GM12878 (cell line): ENCODE measurements at regions of chr4 and their contacts with region 1.

Region 1: GRCh38 chr4:184815046-184815877 is 10.5 kb downstream of the ACSL1 start:
- DNase-seq: peak; percentile 89
- ATAC-seq: peak; percentile 75
- H3K4me3 ChIP-seq: peak overlapping the region; percentile 58
- H3K27ac ChIP-seq: peak overlapping the region; percentile 83
- H3K4me1 ChIP-seq: peaks cover 64% of the 10 kb centered on the region
- H3K27me3 ChIP-seq: no peaks in the 10 kb centered on the region
- CTCF ChIP-seq: no peak
- EP300 ChIP-seq: 0 out of 4 replicates have a peak, but pooled peaks of 1 of the 2 experiments have one; percentile 14
- POLR2A ChIP-seq: peak; percentile 68
- RAD21 ChIP-seq: no peak

Region 2: DNA sequence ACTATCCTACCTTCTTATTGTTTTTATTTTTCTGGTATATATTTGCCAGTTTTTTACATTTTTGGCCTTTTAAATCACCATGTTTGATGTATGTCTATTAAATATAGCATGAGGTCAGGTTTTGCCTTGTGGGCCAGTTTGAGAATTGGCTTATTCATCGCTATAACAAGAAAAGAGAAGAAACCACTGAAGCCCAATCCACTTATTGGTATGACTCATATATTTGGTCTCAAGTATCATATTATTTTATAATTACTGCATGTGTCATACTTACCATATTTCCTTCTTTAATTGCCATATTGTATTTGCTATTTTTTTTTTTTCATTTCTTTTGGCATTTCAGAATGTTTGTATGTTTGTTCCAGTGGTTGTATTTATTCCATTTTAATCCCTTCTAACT is 440.2 kb before region 1 on chr4:
- CTCF ChIA-PET with region 1: no interaction called
- POLR2A ChIA-PET with region 1: no interaction called
- RAD21 ChIA-PET with region 1: no interaction called
- SMC1A ChIA-PET with region 1: no interaction called
- in situ Hi-C with region 1: no loop called
- intact Hi-C with region 1: no loop called
- DNase-seq: no peak
- ATAC-seq: peak; percentile 80
- H3K4me3 ChIP-seq: no peak overlapping the region
- H3K27ac ChIP-seq: no peak overlapping the region
- H3K4me1 ChIP-seq: no peaks in the 10 kb centered on the region
- H3K27me3 ChIP-seq: no peaks in the 10 kb centered on the region
- CTCF ChIP-seq: no peak
- EP300 ChIP-seq: 0 out of 4 replicates have a peak, but pooled peaks of 1 of the 2 experiments have one; percentile 18
- POLR2A ChIP-seq: no peak
- RAD21 ChIP-seq: no peak

Region 3: DNA sequence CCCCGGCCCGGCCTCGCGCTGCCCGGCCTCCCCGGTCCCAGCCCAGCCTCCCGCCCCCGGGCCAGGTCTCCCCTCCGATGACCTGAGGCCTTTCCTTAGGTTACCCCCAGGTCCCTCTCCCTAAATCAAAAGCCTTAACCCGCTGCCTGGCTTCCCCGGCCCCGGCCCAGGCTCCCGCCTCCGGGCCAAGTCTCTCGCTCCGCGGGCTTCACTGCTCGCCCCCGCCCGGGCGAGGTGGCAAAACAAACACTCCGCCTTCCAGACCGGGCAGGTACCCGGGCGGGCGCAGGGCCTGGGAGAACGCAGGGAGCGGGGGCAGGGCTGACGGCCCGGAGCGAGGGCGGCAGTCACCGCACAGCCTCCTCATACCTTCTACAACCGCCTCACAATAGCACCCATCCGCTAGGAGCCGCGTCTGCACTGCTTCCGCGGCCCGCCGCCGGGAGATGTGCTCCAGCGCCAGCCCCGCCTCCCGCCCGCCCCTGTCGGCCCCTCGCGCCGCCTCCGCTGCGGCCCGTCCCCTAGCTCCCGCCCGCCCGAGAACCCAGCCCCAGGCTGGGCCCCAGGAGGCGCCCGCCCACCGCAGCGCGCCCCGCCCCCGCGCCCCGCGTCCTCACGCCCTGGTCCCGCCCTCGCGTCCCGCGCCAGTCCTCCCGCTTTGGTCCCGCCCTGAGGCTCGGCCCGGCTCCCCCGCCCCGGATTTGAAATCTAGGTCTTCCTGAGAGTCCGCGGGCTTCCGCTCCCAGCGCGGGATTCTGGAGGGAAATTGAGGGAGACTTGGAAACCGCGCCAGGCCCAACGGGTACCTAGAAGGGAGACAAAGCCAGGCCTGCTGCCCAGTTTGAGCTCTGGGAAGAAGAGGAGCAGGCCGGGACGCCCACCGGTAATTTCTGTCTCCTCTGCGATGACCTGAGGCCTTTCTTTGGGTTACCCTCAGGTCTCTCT is 166.0 kb before region 1 on chr4 and contains the starts of genes CASP3 and PRIMPOL:
- CTCF ChIA-PET with region 1: interaction called, 3 read pairs
- POLR2A ChIA-PET with region 1: interaction called, 5 read pairs
- RAD21 ChIA-PET with region 1: interaction called, 5 read pairs
- SMC1A ChIA-PET with region 1: no interaction called
- in situ Hi-C with region 1: no loop called
- intact Hi-C with region 1: loop called (anchors 10 kb)
- DNase-seq: peak; percentile 60
- ATAC-seq: peak; percentile 90
- H3K4me3 ChIP-seq: peak within 1 kb of the TSS; percentile 98
- H3K27ac ChIP-seq: peak within 1 kb of the TSS; percentile 85
- H3K4me1 ChIP-seq: peaks cover 12% of the 10 kb centered on the region; the same call in 1 of the 2 replicates
- H3K27me3 ChIP-seq: no peaks in the 10 kb centered on the region
- CTCF ChIP-seq: peak in 2 of 3 experiments; percentile 26 to 43; a peak in 3 of 6 replicates
- EP300 ChIP-seq: no peak
- POLR2A ChIP-seq: peak; percentile 93
- RAD21 ChIP-seq: peak; percentile 28
- polyA plus RNA-seq, gene CASP3: 50.0 to 59.0 TPM
- polyA plus RNA-seq, gene PRIMPOL: 10.6 to 11.5 TPM

Region 4: GRCh38 chr4:184745831-184746795 is 69.1 kb before region 1 on chr4:
- CTCF ChIA-PET with region 1: interaction called, 11 read pairs
- POLR2A ChIA-PET with region 1: interaction called, 4 read pairs
- RAD21 ChIA-PET with region 1: interaction called, 14 read pairs
- SMC1A ChIA-PET with region 1: interaction called, 13 read pairs
- in situ Hi-C with region 1: no loop called
- intact Hi-C with region 1: loop called (anchors 5 kb)
- DNase-seq: no peak
- ATAC-seq: peak; percentile 89
- H3K4me3 ChIP-seq: no peak overlapping the region
- H3K27ac ChIP-seq: no peak overlapping the region
- H3K4me1 ChIP-seq: no peaks in the 10 kb centered on the region
- H3K27me3 ChIP-seq: no peaks in the 10 kb centered on the region
- CTCF ChIP-seq: peak; percentile 77 to 85 (median 82)
- EP300 ChIP-seq: no peak
- POLR2A ChIP-seq: no peak
- RAD21 ChIP-seq: peak; percentile 93

Region 5: GRCh38 chr4:184825896-184826690 is 10.8 kb after region 1 on chr4 and contains the start of gene ACSL1:
- CTCF ChIA-PET with region 1: interaction called, 4 read pairs
- POLR2A ChIA-PET with region 1: interaction called, 6 read pairs
- RAD21 ChIA-PET with region 1: interaction called, 29 read pairs
- SMC1A ChIA-PET with region 1: interaction called, 31 read pairs
- in situ Hi-C with region 1: no loop called
- intact Hi-C with region 1: loop called (anchors 1 kb)
- DNase-seq: no peak
- ATAC-seq: peak; percentile 70
- H3K4me3 ChIP-seq: peak within 1 kb of the TSS; percentile 77
- H3K27ac ChIP-seq: peak within 1 kb of the TSS; percentile 90
- H3K4me1 ChIP-seq: peaks cover 22% of the 10 kb centered on the region
- H3K27me3 ChIP-seq: no peaks in the 10 kb centered on the region
- CTCF ChIP-seq: 0 out of 6 replicates have a peak, but pooled peaks of 1 of the 3 experiments have one; percentile 4
- EP300 ChIP-seq: no peak
- POLR2A ChIP-seq: peak; percentile 88
- RAD21 ChIP-seq: no peak
- polyA plus RNA-seq, gene ACSL1: 30.7 to 32.6 TPM

Region 6: DNA sequence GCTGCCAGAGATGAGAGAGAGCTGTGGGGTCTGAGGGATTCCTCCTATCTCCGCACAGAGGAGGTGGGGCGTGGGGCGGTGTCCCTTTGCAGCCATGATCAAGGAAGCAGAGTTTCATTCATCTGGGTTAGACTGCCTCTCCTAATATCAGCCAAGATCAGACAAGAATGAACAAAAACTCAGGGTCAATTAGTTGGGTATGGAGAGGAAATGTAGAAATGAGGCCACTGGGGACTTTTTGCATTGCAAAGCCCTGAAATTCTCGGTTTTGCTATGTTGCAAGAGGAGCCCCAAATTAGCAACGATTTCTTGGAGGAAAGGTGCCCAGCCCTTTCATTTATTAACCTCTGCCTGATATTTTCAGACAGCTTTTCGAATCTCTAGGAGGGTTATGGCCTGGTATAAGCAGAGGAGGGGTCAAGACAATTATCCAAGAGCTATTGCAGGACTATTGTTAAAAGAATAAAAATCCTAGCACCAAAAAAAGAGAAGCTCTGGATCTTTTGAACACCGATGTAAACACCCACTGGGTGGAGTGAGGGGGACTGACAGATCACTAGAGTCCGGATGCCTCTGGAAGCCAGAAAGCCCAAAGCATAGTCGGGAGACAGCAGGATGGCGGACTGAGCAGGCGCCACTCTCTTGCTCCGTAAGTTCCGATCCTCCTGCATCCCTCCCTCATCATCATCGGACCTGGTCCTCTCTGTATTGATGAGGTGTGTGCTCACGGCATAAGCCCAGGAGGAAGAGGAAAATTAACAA is 44.9 kb after region 1 on chr4:
- CTCF ChIA-PET with region 1: interaction called, 3 read pairs
- POLR2A ChIA-PET with region 1: interaction called, 3 read pairs
- RAD21 ChIA-PET with region 1: interaction called, 13 read pairs
- SMC1A ChIA-PET with region 1: interaction called, 18 read pairs
- in situ Hi-C with region 1: no loop called
- intact Hi-C with region 1: loop called (anchors 5 kb)
- DNase-seq: peak; percentile 65
- ATAC-seq: peak; percentile 85
- H3K4me3 ChIP-seq: 0 out of 2 replicates have a peak overlapping the region, but pooled peaks have one; percentile 19
- H3K27ac ChIP-seq: peak overlapping the region; percentile 68
- H3K4me1 ChIP-seq: peaks cover 45% of the 10 kb centered on the region
- H3K27me3 ChIP-seq: no peaks in the 10 kb centered on the region
- CTCF ChIP-seq: no peak
- EP300 ChIP-seq: peak; percentile 17 to 57; a peak in 2 of 4 replicates
- POLR2A ChIP-seq: no peak
- RAD21 ChIP-seq: no peak

Region 7: GRCh38 chr4:184961660-184962059 is 146.4 kb after region 1 on chr4:
- CTCF ChIA-PET with region 1: no interaction called
- POLR2A ChIA-PET with region 1: no interaction called
- RAD21 ChIA-PET with region 1: no interaction called
- SMC1A ChIA-PET with region 1: no interaction called
- in situ Hi-C with region 1: no loop called
- intact Hi-C with region 1: loop called (anchors 5 kb)
- DNase-seq: no peak
- ATAC-seq: no peak
- H3K4me3 ChIP-seq: no peak overlapping the region
- H3K27ac ChIP-seq: no peak overlapping the region
- H3K4me1 ChIP-seq: no peaks in the 10 kb centered on the region
- H3K27me3 ChIP-seq: peaks cover 0 to 1% of the 10 kb centered on the region in 2 experiments; a peak in 2 of 4 replicates
- CTCF ChIP-seq: no peak
- EP300 ChIP-seq: no peak
- POLR2A ChIP-seq: no peak
- RAD21 ChIP-seq: no peak